Dorsolateral prefrontal cortex (tissue), 120 donors: ENCODE measurements at regions of chr4 and their contacts with region 1.

Region 1: DNA sequence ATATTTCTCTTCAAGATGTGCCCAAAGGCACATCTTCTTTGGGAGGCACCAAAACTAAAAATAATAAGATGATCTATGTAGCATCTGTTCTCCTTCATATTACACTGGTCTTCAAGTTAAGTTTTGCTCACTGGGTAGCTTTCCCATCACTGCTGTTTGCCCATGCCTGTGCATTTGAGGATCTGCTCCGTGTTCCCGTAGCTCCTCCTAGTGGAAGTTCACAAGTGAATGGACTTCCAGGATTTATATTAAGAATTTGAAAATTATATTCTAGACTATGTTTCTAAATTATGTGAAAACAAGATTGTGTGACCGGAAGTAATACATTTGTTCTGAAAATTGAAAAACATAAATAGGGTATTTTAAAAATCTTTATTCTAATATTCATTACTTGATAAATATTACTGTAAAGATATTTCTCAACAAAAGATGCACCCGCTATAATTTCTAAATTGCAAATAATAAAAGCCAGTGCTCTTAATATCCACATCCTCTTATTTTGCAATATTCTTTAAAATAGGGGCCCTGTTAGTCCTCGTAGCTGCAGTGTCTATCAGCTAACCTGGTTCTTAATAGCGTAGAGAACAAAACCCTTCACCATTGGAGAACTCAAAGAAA is 147.7 kb downstream of the RBM46 start:
- DNase-seq: no peak
- H3K4me3 ChIP-seq: no peak overlapping the region
- H3K27ac ChIP-seq: no peak overlapping the region
- H3K27me3 ChIP-seq: no peaks in the 10 kb centered on the region
- CTCF ChIP-seq: peak in 46 of 56 donors; percentile 4 to 59 (median 36)

Region 2: GRCh38 chr4:154551872-154552686 is 376.7 kb before region 1 on chr4:
- intact Hi-C with region 1: loop called in 1 of 2 experiments (anchors 10 kb)
- DNase-seq: peak; percentile 63 to 86 (median 73)
- H3K4me3 ChIP-seq: peak overlapping the region in 1 of 59 donors; percentile 17
- H3K27ac ChIP-seq: no peak overlapping the region
- H3K27me3 ChIP-seq: no peaks in the 10 kb centered on the region
- CTCF ChIP-seq: peak; percentile 72 to 96 (median 86)

Region 3: GRCh38 chr4:154642373-154643009 is 286.3 kb before region 1 on chr4:
- intact Hi-C with region 1: loop called in 1 of 2 experiments (anchors 10 kb)
- DNase-seq: no peak
- H3K4me3 ChIP-seq: no peak overlapping the region
- H3K27ac ChIP-seq: no peak overlapping the region
- H3K27me3 ChIP-seq: peaks cover 0 to 6% (median 0%) of the 10 kb centered on the region in 45 donors
- CTCF ChIP-seq: peak in 13 of 56 donors; percentile 8 to 48 (median 20)